Activated CD8-positive, alpha-beta T cell treated with anti-CD3 and anti-CD28 coated beads, Interleukin-2, amount 10 ng/mL, durations not matched to agents 7 days and 5 days (primary cell): ENCODE measurements at regions of chr1 and their contacts with region 1.

Region 1: GRCh38 chr1:212782422-212783154 is 9.0 kb downstream of the NSL1 start:
- DNase-seq: no peak
- ATAC-seq: peak; percentile 57
- H3K4me3 Mint-ChIP-seq: no peak overlapping the region
- H3K27ac Mint-ChIP-seq: no peak overlapping the region
- H3K4me1 Mint-ChIP-seq: no peaks in the 10 kb centered on the region
- H3K27me3 Mint-ChIP-seq: no peaks in the 10 kb centered on the region

Region 2: DNA sequence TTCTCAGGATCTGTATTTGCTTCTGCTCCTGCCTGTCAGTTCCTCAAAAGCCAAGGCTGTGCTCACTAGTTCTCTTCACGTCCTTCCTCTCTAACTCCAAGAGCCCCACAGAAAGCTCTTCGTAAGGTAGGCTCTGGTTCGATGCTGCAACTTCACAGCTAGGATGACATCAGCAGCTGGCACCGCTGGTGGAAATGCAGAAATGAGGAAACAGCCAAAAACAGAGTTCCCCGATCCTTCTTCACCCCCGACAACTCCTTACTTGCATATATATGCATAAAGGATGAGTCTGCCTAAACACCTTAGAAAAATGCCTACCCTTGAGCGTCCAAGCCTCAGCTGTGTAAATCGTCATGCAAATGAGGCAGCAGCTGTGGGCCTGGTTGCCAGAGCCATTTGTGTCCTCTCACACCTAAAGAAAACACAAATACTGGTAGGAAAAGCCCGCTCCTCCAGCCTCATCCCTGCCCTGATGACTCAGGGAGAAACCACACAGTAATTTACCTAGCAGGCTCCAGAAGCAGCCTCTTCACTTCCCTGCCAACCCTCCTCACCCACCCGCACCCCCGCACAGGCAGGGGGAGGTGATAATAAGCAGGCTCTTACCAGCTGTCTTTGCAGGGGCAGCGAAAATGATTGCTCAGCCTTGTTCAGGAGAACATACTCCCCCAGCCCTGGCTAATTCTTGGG is 111.1 kb before region 1 on chr1:
- CTCF ChIA-PET with region 1: interaction called, 26 read pairs
- POLR2A ChIA-PET with region 1: no interaction called
- DNase-seq: peak; percentile 20
- ATAC-seq: no peak
- H3K4me3 Mint-ChIP-seq: no peak overlapping the region
- H3K27ac Mint-ChIP-seq: no peak overlapping the region
- H3K4me1 Mint-ChIP-seq: peaks cover 37% of the 10 kb centered on the region
- H3K27me3 Mint-ChIP-seq: peaks cover 9% of the 10 kb centered on the region

Region 3: DNA sequence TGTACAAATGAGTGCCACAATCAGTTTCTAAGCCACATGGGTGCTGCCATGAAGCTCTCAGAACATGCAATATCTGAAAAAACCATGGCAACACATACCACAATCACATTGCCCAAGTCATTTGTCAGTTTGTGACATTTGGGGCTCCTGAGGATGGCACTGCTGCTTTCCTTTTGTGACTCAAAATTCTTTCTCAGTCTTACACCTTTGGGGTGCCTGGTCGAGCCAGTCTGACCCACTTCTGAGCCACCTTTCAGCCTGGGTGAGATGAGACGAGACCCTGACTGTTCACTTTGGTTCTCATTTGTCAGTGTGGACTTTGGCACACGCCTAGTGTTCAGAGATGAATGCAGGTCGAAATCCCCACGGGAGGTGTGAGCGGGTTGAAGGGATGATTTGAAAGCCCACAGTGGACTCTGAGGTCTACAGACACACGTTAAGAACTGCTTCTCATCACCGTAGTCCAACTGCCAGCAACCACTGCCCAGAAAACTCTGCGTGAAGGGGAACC is 91.0 kb before region 1 on chr1:
- CTCF ChIA-PET with region 1: interaction called, 15 read pairs
- POLR2A ChIA-PET with region 1: no interaction called
- DNase-seq: no peak
- ATAC-seq: peak; percentile 38
- H3K4me3 Mint-ChIP-seq: no peak overlapping the region
- H3K27ac Mint-ChIP-seq: no peak overlapping the region
- H3K4me1 Mint-ChIP-seq: peaks cover 26% of the 10 kb centered on the region
- H3K27me3 Mint-ChIP-seq: no peaks in the 10 kb centered on the region

Region 4: DNA sequence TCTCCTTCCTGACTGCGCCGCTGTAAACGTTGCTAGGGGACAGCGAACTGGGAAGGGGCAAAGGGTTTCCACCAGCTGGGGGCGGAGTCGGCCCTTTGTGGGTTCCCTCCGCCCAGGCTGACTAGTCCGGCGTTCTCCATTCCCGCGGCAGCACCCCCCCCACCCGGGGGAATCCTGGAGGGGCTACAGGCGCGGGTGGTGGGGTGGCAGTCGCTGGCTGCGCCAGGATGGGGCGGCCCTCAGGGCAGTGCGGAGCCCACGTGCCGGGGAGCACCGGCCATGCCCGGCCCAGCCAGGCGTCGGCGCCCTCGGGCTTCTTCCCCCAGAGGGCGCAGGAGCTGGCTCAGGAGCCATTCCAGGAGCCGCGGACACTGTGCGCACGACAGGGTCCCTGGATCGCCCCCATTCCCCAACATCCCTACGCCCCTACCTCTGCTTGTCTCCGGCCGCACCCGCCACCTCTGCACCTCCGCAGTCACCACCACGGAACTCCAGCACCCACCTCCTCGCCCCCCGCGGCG is 83.4 kb before region 1 on chr1:
- CTCF ChIA-PET with region 1: interaction called, 15 read pairs
- POLR2A ChIA-PET with region 1: no interaction called
- DNase-seq: peak; percentile 64
- ATAC-seq: peak; percentile 82
- H3K4me3 Mint-ChIP-seq: peak overlapping the region; percentile 87
- H3K27ac Mint-ChIP-seq: peak overlapping the region; percentile 80
- H3K4me1 Mint-ChIP-seq: peaks cover 52% of the 10 kb centered on the region
- H3K27me3 Mint-ChIP-seq: peaks cover 5% of the 10 kb centered on the region

Region 5: GRCh38 chr1:212915245-212916091 is 132.9 kb after region 1 on chr1:
- CTCF ChIA-PET with region 1: no interaction called
- POLR2A ChIA-PET with region 1: no interaction called
- DNase-seq: no peak
- ATAC-seq: no peak
- H3K4me3 Mint-ChIP-seq: no peak overlapping the region
- H3K27ac Mint-ChIP-seq: no peak overlapping the region
- H3K4me1 Mint-ChIP-seq: peaks cover 4% of the 10 kb centered on the region
- H3K27me3 Mint-ChIP-seq: peaks cover 11% of the 10 kb centered on the region

Region 6: DNA sequence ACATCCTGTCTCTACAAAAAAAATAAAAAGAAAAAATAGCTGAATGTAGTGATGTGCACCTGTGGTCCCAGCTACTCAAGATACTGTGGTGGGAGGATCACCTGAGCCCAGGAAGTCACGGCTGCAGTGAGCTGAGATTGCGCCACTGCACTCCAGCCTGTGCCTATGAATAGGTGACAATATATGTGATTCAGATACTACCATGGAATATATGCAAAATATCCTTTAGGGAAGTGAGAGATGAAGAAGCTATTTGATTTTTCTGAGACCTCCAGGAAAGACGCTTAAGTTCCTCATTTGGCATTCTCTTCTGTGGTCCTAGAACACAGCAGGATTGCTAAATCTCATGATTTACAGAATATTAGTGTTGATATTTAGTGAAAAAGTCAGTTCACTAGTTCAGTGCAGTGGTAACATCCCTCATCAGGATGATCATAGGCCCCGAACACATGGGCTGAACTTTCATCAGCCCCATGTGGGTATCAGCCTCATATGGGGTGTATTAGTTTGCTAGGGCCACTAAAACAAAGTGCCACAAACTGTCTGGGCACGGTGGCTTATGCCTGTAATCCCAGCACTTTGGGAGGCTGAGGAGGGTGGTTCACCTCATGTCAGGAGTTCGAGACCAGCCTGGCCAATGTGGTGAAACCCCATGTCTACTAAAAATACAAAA is 161.8 kb after region 1 on chr1:
- CTCF ChIA-PET with region 1: no interaction called
- POLR2A ChIA-PET with region 1: no interaction called
- DNase-seq: no peak
- ATAC-seq: no peak
- H3K4me3 Mint-ChIP-seq: no peak overlapping the region
- H3K27ac Mint-ChIP-seq: no peak overlapping the region
- H3K4me1 Mint-ChIP-seq: no peaks in the 10 kb centered on the region
- H3K27me3 Mint-ChIP-seq: peaks cover 23% of the 10 kb centered on the region